Caco-2 (cell line): ENCODE measurements at regions of chr4 and their contacts with region 1.

Region 1: DNA sequence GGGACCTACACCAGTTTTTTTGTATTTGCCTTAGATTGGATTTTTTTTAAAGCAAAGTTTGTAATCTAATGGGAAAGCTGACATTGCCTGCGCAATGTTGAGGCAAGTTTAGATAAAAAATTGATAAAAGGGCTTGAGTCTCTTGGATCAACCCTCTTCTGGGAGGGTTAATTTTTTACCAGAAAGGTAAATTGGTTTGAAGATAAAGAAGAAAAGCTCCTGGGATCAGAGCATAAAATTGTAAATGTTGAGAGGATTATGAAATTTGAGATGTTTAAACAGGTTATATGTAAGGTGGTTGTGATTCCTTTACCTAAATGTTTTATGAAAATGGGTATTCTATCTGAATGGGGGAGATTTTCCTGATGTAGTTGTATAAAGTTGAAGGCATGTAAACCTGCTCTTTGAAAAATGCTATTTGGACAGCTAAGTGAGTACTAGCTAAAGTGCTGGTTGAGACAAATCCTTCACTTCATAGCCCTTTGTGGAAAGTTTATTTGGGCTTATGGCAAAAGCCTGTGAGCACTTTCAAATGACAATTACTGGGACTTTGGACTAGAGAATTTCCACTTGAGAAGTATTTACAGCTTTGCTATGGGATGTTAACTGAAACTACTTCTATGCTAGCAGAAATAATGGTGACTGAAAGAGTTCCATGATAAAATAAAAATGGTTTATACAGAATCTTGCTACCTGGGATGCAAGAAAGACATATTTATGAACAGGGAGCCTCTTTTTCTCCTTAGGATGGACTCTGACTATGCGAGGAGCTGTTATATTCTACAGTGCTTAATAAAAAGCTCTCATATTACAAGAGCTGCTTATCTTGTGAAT is 56.2 kb downstream of the UGT2B10 start:
- DNase-seq: peak in 1 of 2 experiments; percentile 67
- H3K4me3 ChIP-seq: no peak overlapping the region
- H3K4me3 Mint-ChIP-seq: peak overlapping the region; percentile 44
- H3K27ac Mint-ChIP-seq: peak overlapping the region; percentile 69
- H3K4me1 ChIP-seq: peaks cover 34% of the 10 kb centered on the region
- H3K4me1 Mint-ChIP-seq: no peaks in the 10 kb centered on the region
- H3K27me3 ChIP-seq: no peaks in the 10 kb centered on the region
- H3K27me3 Mint-ChIP-seq: no peaks in the 10 kb centered on the region
- CTCF ChIP-seq: no peak

Region 2: DNA sequence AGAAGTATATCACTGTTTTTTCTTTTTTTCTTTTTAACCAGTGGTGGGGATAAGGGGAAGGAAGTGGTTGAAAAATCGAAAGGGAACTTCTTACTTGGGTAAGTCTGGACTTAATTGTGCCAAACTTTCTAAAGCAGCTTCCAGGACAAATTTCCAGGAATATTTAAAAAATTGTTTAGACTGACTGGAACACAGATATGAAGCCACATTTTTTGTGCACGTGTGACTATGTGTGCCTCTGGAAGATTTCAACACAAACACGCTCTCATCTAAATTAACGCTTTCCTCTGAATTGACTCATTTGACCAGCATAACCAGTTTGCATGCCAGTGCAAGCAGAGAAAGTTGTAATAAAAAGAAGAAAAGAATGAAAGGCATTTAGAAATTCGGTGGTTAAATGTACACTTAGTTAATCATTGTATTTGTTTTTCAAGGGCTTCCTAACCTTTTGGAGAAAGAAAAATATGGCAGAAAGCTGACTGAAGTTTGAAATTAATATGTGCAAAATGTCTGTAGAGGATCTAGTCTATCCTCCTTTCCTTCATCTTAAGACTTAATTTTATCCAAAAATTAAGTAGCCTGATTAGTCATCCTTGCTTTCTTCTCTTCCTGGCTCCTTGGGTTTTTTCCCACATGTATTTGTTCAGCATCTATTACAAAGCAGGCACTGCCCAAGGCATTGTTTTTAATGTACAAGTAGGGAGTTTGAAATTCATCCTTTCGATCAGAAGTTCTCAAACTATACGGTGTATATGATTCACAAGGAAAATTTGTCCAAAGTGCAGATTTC is 503.1 kb before region 1 on chr4:
- CTCF ChIA-PET with region 1: no interaction called
- POLR2A ChIA-PET with region 1: interaction called, 3 read pairs
- intact Hi-C with region 1: loop called (anchors 5 kb)
- DNase-seq: peak; percentile 61 to 73
- H3K4me3 ChIP-seq: no peak overlapping the region
- H3K4me3 Mint-ChIP-seq: peak overlapping the region; percentile 47
- H3K27ac Mint-ChIP-seq: peak overlapping the region; percentile 94
- H3K4me1 ChIP-seq: peaks cover 27% of the 10 kb centered on the region
- H3K4me1 Mint-ChIP-seq: peaks cover 17% of the 10 kb centered on the region
- H3K27me3 ChIP-seq: no peaks in the 10 kb centered on the region
- H3K27me3 Mint-ChIP-seq: no peaks in the 10 kb centered on the region
- CTCF ChIP-seq: no peak

Region 3: DNA sequence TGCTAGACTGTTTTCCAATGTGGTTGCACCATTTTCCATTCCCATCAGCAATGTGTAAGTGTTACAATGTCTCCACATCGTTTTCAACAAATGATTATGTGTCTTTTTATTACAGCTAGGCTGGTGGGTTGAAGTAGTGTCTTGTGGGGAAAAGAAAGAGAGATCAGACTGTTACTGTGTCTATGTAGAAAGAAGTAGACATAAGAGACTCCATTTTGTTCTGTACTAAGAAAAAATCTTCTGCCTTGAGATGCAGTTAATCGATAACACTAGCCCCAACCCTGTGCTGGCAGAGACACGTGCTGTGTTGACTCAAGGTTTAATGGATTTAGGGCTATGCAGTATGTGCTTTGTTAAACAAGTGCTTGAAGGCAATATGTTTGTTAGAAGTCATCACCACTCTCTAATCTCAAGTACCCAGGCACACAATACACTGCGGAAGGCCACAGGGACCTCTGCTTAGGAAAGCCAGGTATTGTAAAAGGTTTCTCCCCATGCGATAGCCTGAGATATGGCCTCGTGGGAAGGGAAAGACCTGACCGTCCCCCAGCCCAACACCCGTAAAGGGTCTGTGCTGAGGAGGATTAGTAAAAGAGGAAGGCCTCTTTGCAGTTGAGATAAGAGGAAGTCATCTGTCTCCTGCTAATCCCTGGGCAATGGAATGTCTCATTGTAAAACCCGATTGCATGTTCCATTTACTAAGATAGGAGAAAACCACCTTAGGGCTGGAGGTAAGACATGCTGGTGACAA is 178.5 kb before region 1 on chr4:
- CTCF ChIA-PET with region 1: no interaction called
- POLR2A ChIA-PET with region 1: no interaction called
- intact Hi-C with region 1: loop called (anchors 1 kb)
- DNase-seq: peak; percentile 81 to 90
- H3K4me3 ChIP-seq: no peak overlapping the region
- H3K4me3 Mint-ChIP-seq: no peak overlapping the region
- H3K27ac Mint-ChIP-seq: peak overlapping the region; percentile 72
- H3K4me1 ChIP-seq: peaks cover 20% of the 10 kb centered on the region
- H3K4me1 Mint-ChIP-seq: peaks cover 6% of the 10 kb centered on the region
- H3K27me3 ChIP-seq: no peaks in the 10 kb centered on the region
- H3K27me3 Mint-ChIP-seq: no peaks in the 10 kb centered on the region
- CTCF ChIP-seq: no peak

Region 4: GRCh38 chr4:68831642-68832041 is 40.4 kb before region 1 on chr4:
- CTCF ChIA-PET with region 1: no interaction called
- POLR2A ChIA-PET with region 1: no interaction called
- intact Hi-C with region 1: no loop called
- DNase-seq: no peak
- H3K4me3 ChIP-seq: no peak overlapping the region
- H3K4me3 Mint-ChIP-seq: no peak overlapping the region
- H3K27ac Mint-ChIP-seq: no peak overlapping the region
- H3K4me1 ChIP-seq: 0 out of 2 replicates have a peak, but pooled peaks cover 3% of the 10 kb centered on the region
- H3K4me1 Mint-ChIP-seq: no peaks in the 10 kb centered on the region
- H3K27me3 ChIP-seq: no peaks in the 10 kb centered on the region
- H3K27me3 Mint-ChIP-seq: no peaks in the 10 kb centered on the region
- CTCF ChIP-seq: no peak

Region 5: DNA sequence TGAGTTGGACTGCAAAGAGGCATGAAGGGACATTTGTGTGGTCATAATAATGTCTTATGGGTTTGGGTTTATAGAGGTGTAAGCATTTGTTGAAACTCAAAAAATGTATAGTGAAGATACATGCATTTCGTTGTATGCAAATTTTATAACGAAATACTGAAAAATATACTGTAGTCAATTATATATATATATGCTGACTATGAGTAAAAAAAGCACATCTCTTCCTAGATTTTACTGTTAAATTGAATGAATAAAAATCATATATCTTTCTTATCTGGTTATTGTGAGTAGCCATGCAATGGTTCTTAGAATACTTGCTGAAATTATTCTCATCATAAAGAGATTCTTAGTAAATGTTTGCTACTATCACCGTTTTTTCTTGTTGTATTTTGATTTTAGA is 21.7 kb before region 1 on chr4:
- CTCF ChIA-PET with region 1: no interaction called
- POLR2A ChIA-PET with region 1: no interaction called
- intact Hi-C with region 1: no loop called
- DNase-seq: no peak
- H3K4me3 ChIP-seq: no peak overlapping the region
- H3K4me3 Mint-ChIP-seq: no peak overlapping the region
- H3K27ac Mint-ChIP-seq: no peak overlapping the region
- H3K4me1 ChIP-seq: no peaks in the 10 kb centered on the region
- H3K4me1 Mint-ChIP-seq: no peaks in the 10 kb centered on the region
- H3K27me3 ChIP-seq: no peaks in the 10 kb centered on the region
- H3K27me3 Mint-ChIP-seq: no peaks in the 10 kb centered on the region
- CTCF ChIP-seq: no peak

Region 6: DNA sequence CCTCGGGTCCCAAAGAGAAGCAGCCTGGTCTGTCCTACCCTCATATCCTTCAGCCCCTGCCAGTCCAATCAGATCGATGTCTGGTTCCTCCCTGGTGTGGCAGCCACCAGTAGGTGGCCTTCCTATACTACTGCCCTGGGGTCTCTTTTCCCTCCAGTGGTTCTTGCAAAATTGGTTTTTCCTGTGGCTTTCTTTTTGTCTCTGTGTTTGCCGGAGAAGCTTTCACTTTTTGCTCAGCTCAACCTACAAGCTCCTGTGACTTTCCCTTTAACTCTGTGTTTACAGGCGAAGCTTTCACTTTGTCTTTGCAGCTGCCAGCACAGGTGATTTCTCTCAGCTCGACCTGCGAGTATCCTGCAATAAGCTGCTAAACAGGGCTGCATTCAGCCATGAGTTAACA is 32.8 kb after region 1 on chr4:
- CTCF ChIA-PET with region 1: interaction called, 9 read pairs
- POLR2A ChIA-PET with region 1: interaction called, 4 read pairs
- intact Hi-C with region 1: loop called (anchors 1 kb)
- DNase-seq: peak; percentile 62 to 63
- H3K4me3 ChIP-seq: no peak overlapping the region
- H3K4me3 Mint-ChIP-seq: peak overlapping the region; percentile 83
- H3K27ac Mint-ChIP-seq: peak overlapping the region; percentile 94
- H3K4me1 ChIP-seq: peaks cover 47% of the 10 kb centered on the region
- H3K4me1 Mint-ChIP-seq: peaks cover 17% of the 10 kb centered on the region
- H3K27me3 ChIP-seq: no peaks in the 10 kb centered on the region
- H3K27me3 Mint-ChIP-seq: no peaks in the 10 kb centered on the region
- CTCF ChIP-seq: peak; percentile 44 to 54

Region 7: GRCh38 chr4:68927165-68927564 is 55.1 kb after region 1 on chr4:
- CTCF ChIA-PET with region 1: no interaction called
- POLR2A ChIA-PET with region 1: no interaction called
- intact Hi-C with region 1: no loop called
- DNase-seq: no peak
- H3K4me3 ChIP-seq: no peak overlapping the region
- H3K4me3 Mint-ChIP-seq: no peak overlapping the region
- H3K27ac Mint-ChIP-seq: no peak overlapping the region
- H3K4me1 ChIP-seq: no peaks in the 10 kb centered on the region
- H3K4me1 Mint-ChIP-seq: no peaks in the 10 kb centered on the region
- H3K27me3 ChIP-seq: no peaks in the 10 kb centered on the region
- H3K27me3 Mint-ChIP-seq: no peaks in the 10 kb centered on the region
- CTCF ChIP-seq: no peak

Region 8: DNA sequence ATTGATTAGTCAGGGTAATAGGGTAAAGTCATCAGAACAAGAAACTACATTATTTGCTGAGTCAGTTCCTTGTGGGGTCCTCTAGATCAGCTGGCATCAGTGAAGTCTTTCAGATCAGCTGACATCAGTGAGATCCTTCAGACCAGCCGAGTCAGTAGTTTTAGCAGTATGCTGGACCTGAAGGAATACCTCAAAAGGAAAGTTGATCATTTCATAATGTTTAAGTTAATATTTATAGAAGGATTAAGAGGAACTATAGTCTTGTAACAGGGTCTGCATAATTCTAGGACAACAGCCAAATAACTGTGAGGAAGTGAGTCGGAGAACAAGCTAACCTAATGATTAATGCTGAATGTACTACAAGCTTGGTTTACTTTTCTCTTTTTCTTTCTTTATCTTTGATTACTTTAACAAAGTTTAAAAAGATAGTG is 223.3 kb after region 1 on chr4:
- CTCF ChIA-PET with region 1: no interaction called
- POLR2A ChIA-PET with region 1: no interaction called
- intact Hi-C with region 1: loop called (anchors 1 kb)
- DNase-seq: no peak
- H3K4me3 ChIP-seq: no peak overlapping the region
- H3K4me3 Mint-ChIP-seq: no peak overlapping the region
- H3K27ac Mint-ChIP-seq: peak overlapping the region; percentile 81
- H3K4me1 ChIP-seq: peaks cover 31% of the 10 kb centered on the region
- H3K4me1 Mint-ChIP-seq: peaks cover 28% of the 10 kb centered on the region
- H3K27me3 ChIP-seq: no peaks in the 10 kb centered on the region
- H3K27me3 Mint-ChIP-seq: no peaks in the 10 kb centered on the region
- CTCF ChIP-seq: no peak

Region 9: DNA sequence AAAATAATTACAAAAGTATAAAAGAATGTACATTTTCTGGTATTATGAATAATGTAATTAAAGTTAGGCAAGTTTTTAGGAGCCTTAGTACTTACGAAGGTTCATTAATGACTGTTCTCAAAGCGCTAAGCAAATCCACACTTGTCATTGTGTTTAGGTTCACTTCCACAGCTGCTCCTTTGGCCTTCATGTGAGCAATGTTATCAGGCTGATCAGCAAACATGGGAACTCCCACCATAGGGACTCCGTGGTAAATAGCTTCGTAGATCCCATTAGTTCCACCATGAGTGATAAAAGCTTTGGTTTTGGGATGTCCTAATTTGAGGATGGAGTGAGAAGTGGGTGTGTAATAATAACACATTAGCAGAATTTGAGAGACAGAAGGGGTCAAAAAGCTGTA is 722.4 kb after region 1 on chr4:
- CTCF ChIA-PET with region 1: no interaction called
- POLR2A ChIA-PET with region 1: no interaction called
- intact Hi-C with region 1: loop called (anchors 10 kb)
- DNase-seq: peak in 1 of 2 experiments; percentile 38
- H3K4me3 ChIP-seq: no peak overlapping the region
- H3K4me3 Mint-ChIP-seq: no peak overlapping the region
- H3K27ac Mint-ChIP-seq: no peak overlapping the region
- H3K4me1 ChIP-seq: peaks cover 35% of the 10 kb centered on the region
- H3K4me1 Mint-ChIP-seq: peaks cover 29% of the 10 kb centered on the region
- H3K27me3 ChIP-seq: no peaks in the 10 kb centered on the region
- H3K27me3 Mint-ChIP-seq: no peaks in the 10 kb centered on the region
- CTCF ChIP-seq: no peak